Ovary (tissue), 10 donors: ENCODE measurements at regions of chr17 and their contacts with region 1.

Region 1: GRCh38 chr17:48131216-48131824 is 23.8 kb downstream of the SNX11 start:
- DNase-seq: peak in 4 of 5 donors; percentile 45 to 69 (median 56)
- H3K4me3 ChIP-seq: no peak overlapping the region
- H3K27ac ChIP-seq: no peak overlapping the region
- H3K4me1 ChIP-seq: no peaks in the 10 kb centered on the region
- H3K27me3 ChIP-seq: no peaks in the 10 kb centered on the region
- CTCF ChIP-seq: peak; percentile 63 to 71 (median 71)
- EP300 ChIP-seq: no peak
- POLR2A ChIP-seq: no peak

Region 2: GRCh38 chr17:48024937-48025906 is 106.1 kb before region 1 on chr17:
- intact Hi-C with region 1: loop called in 3 of 4 experiments (anchors 2 to 5 kb)
- DNase-seq: peak; percentile 96 to 99 (median 98)
- H3K4me3 ChIP-seq: peak overlapping the region; percentile 38
- H3K27ac ChIP-seq: no peak overlapping the region
- H3K4me1 ChIP-seq: peaks cover 13% of the 10 kb centered on the region
- H3K27me3 ChIP-seq: no peaks in the 10 kb centered on the region
- CTCF ChIP-seq: peak; percentile 62 to 91 (median 80)
- EP300 ChIP-seq: no peak
- POLR2A ChIP-seq: no peak

Region 3: DNA sequence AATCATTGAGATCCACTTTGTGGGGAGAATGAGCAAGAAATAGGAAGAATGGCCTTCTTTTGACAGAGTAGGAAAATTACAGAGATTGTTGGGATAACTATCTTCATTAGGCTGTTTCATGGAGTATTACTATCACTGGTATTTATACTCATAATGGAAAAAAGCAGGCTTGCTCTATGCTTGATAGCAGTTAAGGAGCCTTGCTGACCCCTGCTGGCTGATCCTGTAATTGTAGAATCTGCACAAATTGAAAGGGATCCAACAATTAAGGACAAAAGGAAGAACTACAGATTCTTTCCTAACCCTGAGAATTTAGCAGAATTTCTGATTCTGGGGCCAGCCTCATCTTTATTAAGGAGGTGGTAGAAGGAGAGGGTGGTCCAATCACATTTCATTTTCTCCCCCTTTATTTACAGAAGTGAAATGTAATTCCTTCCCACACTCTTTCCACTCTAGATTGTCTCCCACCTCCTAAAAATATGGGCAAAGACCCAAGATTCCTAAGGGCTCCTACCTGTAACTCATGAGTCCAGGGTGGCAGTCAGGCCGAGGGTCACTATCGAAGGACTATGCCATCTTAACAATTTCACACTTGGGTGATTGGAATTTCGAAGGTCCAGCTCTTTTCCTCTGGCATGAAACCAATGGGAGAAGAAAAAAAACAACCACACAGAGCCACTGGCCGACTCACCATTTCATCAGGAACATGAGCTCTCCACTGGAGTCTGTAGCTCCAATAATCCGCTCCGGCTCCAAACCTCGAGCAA is 56.8 kb before region 1 on chr17:
- intact Hi-C with region 1: loop called in 1 of 4 experiments (anchors 10 kb)
- DNase-seq: peak; percentile 72 to 88 (median 75)
- H3K4me3 ChIP-seq: no peak overlapping the region
- H3K27ac ChIP-seq: no peak overlapping the region
- H3K4me1 ChIP-seq: no peaks in the 10 kb centered on the region
- H3K27me3 ChIP-seq: no peaks in the 10 kb centered on the region
- CTCF ChIP-seq: peak; percentile 82 to 93 (median 89)
- EP300 ChIP-seq: no peak
- POLR2A ChIP-seq: no peak

Region 4: DNA sequence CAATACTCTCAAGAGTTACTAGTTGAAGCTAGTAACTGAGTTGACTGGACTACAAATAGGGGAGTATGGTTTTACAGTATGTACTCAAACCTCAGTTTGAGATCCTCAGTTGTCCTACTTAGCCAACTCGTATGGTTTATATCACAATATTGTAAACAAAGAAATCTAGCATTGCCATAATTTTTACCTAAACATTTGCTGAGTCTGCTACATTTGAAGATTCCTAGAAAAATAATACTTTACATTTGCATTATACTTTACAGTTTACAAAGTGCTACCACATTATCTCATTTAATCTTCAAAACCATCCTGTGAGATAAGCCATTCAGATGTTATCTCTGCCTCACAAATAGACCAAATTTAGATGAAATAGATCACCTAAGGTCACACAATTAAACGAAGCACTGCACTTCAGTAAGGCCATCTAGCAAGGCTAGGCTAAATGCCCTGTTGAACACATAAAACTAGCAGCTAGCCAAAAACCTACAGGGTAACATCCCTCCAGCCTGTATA is 46.3 kb before region 1 on chr17:
- intact Hi-C with region 1: loop called in 1 of 4 experiments (anchors 5 kb)
- DNase-seq: no peak
- H3K4me3 ChIP-seq: no peak overlapping the region
- H3K27ac ChIP-seq: no peak overlapping the region
- H3K4me1 ChIP-seq: peaks cover 4% of the 10 kb centered on the region
- H3K27me3 ChIP-seq: no peaks in the 10 kb centered on the region
- CTCF ChIP-seq: no peak
- EP300 ChIP-seq: no peak
- POLR2A ChIP-seq: no peak

Region 5: DNA sequence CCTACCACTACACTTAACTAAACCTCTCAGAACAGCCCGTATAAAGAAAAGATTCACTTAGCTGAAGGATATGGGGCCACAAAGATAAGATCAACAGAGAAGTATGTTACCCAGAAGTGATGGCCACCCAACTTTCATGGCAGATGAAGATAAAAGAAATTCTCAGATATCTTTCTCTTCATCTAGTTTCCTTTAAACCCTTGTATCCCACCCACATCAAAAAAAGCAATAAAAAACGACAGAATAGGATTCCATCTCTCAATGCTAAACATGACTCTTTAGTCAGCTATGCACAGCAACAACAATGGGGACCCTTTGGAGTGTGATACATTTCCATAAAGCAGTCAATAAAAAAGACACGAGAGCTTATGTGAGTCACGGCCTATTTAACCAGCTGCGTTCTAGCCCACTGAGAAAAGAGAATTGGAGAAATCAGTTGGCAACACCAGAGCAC is 62.8 kb after region 1 on chr17:
- intact Hi-C with region 1: no loop called
- DNase-seq: no peak
- H3K4me3 ChIP-seq: no peak overlapping the region
- H3K27ac ChIP-seq: no peak overlapping the region
- H3K4me1 ChIP-seq: no peaks in the 10 kb centered on the region
- H3K27me3 ChIP-seq: no peaks in the 10 kb centered on the region
- CTCF ChIP-seq: no peak
- EP300 ChIP-seq: no peak
- POLR2A ChIP-seq: no peak